Stomach (tissue), 19 donors: ENCODE measurements at regions of chr17 and their contacts with region 1.

Region 1: DNA sequence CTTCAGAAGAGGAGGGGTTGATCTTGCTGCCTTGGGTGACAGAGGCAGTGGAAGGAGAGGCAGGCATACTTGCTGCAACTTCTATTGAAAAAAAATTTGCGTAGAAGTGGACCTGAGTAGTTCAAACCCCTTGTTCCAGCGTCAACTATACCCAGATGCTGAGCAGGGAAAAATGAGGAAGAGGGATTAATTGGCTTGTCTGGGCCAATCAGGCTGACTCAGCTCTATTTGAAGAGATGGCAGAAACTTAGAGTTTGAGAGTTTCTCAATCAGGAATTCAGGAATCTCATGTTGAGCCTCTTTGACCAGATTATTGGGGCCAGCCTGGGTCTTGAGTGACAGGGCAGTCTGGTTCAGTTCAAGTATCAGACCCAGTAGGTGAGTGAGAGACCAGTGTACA is 17.6 kb downstream of the CASC3 start:
- DNase-seq: no peak
- H3K4me3 ChIP-seq: no peak overlapping the region
- H3K27ac ChIP-seq: peak overlapping the region in 4 of 5 donors; percentile 2 to 44 (median 34)
- H3K4me1 ChIP-seq: peaks cover 0 to 39% (median 19%) of the 10 kb centered on the region in 4 donors
- H3K27me3 ChIP-seq: no peaks in the 10 kb centered on the region
- CTCF ChIP-seq: no peak
- EP300 ChIP-seq: no peak
- POLR2A ChIP-seq: no peak

Region 2: GRCh38 chr17:40038882-40039513 is 119.0 kb before region 1 on chr17:
- intact Hi-C with region 1: loop called (anchors 10 kb)
- DNase-seq: peak; percentile 63 to 92
- H3K4me3 ChIP-seq: no peak overlapping the region
- H3K27ac ChIP-seq: peak overlapping the region in 4 of 5 donors; percentile 59 to 75 (median 68)
- H3K4me1 ChIP-seq: peaks cover 0 to 22% (median 13%) of the 10 kb centered on the region in 4 donors
- H3K27me3 ChIP-seq: no peaks in the 10 kb centered on the region
- CTCF ChIP-seq: peak in 5 of 7 experiments; percentile 46 to 71 (median 53)
- EP300 ChIP-seq: no peak
- POLR2A ChIP-seq: no peak